ENCODE measurements at regions of chr6 and their contacts with region 1.

Region 1: GRCh38 chr6:38493931-38494547 is 145.7 kb downstream of the BTBD9 start:
- DNase-seq: peak; percentile 88
- H3K4me3 Mint-ChIP-seq: no peak overlapping the region
- H3K27ac Mint-ChIP-seq: no peak overlapping the region
- H3K4me1 Mint-ChIP-seq: peaks cover 9% of the 10 kb centered on the region
- H3K27me3 Mint-ChIP-seq: no peaks in the 10 kb centered on the region

Region 2: DNA sequence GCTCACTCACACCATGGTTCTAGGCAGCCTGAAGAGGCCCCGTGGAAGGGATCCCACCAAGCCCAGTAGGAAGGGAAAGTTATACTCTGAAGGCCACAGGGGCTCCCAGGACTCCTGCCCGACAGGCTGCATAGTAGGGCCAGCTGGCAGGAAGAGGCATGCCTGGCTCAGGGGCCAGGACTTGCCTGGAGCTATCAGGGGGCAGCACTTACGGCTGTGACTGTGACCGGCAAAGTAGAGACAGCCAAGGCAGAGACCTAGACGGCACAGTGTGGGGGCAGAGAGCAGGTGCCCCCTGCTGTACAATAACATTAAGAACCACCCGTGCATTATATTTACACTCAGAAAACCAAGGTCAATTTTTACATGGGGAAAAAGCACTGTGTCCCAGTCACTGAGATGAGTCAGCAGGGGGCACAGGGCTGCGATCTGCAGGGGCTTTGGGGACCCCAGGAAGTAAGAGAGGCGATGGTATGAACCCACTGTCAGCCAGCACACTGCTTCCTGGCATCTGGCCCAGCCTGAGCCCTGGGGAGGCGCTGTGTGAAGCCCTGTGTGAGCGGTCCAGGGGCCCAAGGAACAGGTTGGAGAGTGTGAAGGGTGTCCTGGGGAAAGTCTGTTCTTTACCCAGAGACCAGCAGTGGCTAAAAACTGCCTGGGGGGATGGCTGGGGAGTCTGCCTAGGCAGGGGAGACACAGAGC is 1004.2 kb before region 1 on chr6:
- CTCF ChIA-PET with region 1: no interaction called
- POLR2A ChIA-PET with region 1: no interaction called
- intact Hi-C with region 1: loop called (anchors 5 kb)
- DNase-seq: peak; percentile 51
- H3K4me3 Mint-ChIP-seq: no peak overlapping the region
- H3K27ac Mint-ChIP-seq: peak overlapping the region; percentile 76
- H3K4me1 Mint-ChIP-seq: peaks cover 70% of the 10 kb centered on the region
- H3K27me3 Mint-ChIP-seq: no peaks in the 10 kb centered on the region

Region 3: GRCh38 chr6:37698261-37699137 is 795.5 kb before region 1 on chr6:
- CTCF ChIA-PET with region 1: no interaction called
- POLR2A ChIA-PET with region 1: no interaction called
- intact Hi-C with region 1: loop called (anchors 5 kb)
- DNase-seq: peak; percentile 72
- H3K4me3 Mint-ChIP-seq: peak overlapping the region; percentile 95
- H3K27ac Mint-ChIP-seq: peak overlapping the region; percentile 87
- H3K4me1 Mint-ChIP-seq: peaks cover 21% of the 10 kb centered on the region
- H3K27me3 Mint-ChIP-seq: peaks cover 12% of the 10 kb centered on the region

Region 4: GRCh38 chr6:37791156-37791919 is 702.7 kb before region 1 on chr6:
- CTCF ChIA-PET with region 1: interaction called, 4 read pairs
- POLR2A ChIA-PET with region 1: no interaction called
- intact Hi-C with region 1: loop called (anchors 5 kb)
- DNase-seq: peak; percentile 94
- H3K4me3 Mint-ChIP-seq: no peak overlapping the region
- H3K27ac Mint-ChIP-seq: no peak overlapping the region
- H3K4me1 Mint-ChIP-seq: peaks cover 12% of the 10 kb centered on the region
- H3K27me3 Mint-ChIP-seq: no peaks in the 10 kb centered on the region

Region 5: DNA sequence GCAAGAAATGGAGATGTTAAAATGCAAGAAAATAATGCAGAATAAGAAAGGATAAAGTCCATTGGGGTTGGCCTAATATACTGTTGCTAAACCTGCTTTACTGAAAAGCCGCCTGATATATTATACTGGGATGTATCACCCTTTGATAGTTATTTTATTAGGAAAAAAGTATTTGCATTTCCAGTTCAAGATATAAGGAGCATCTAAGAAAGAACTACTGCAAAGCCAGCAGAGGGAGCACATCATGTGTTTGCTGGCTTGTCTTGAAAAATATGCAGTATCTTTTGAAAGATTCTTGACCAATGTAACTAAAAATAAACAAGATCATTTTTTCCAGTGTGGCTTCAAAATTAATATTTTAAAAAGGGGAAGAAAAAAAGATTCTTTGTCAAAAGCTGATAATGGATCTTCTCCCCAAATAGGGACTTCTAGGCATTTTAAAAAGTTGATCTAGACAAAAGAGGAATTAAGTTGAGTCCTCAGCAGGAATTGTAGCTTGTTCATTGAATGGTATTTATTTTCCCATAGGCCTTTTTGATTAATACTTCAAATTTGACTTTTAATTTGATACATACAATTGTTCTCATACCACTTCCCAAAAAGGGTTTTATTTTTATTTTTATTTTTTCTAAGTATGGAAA is 459.6 kb before region 1 on chr6:
- CTCF ChIA-PET with region 1: interaction called, 21 read pairs
- POLR2A ChIA-PET with region 1: no interaction called
- intact Hi-C with region 1: loop called (anchors 10 kb)
- DNase-seq: no peak
- H3K4me3 Mint-ChIP-seq: no peak overlapping the region
- H3K27ac Mint-ChIP-seq: no peak overlapping the region
- H3K4me1 Mint-ChIP-seq: peaks cover 40% of the 10 kb centered on the region
- H3K27me3 Mint-ChIP-seq: no peaks in the 10 kb centered on the region

Region 6: GRCh38 chr6:38483526-38483925 is 10.5 kb before region 1 on chr6:
- CTCF ChIA-PET with region 1: interaction called, 19 read pairs
- POLR2A ChIA-PET with region 1: no interaction called
- intact Hi-C with region 1: no loop called
- DNase-seq: no peak
- H3K4me3 Mint-ChIP-seq: no peak overlapping the region
- H3K27ac Mint-ChIP-seq: no peak overlapping the region
- H3K4me1 Mint-ChIP-seq: peaks cover 5% of the 10 kb centered on the region
- H3K27me3 Mint-ChIP-seq: no peaks in the 10 kb centered on the region

Region 7: GRCh38 chr6:38542031-38542430 is 48.0 kb after region 1 on chr6:
- CTCF ChIA-PET with region 1: no interaction called
- POLR2A ChIA-PET with region 1: no interaction called
- intact Hi-C with region 1: no loop called
- DNase-seq: no peak
- H3K4me3 Mint-ChIP-seq: no peak overlapping the region
- H3K27ac Mint-ChIP-seq: no peak overlapping the region
- H3K4me1 Mint-ChIP-seq: no peaks in the 10 kb centered on the region
- H3K27me3 Mint-ChIP-seq: no peaks in the 10 kb centered on the region

Region 8: GRCh38 chr6:38671885-38672467 is 177.9 kb after region 1 on chr6:
- CTCF ChIA-PET with region 1: interaction called, 4 read pairs
- POLR2A ChIA-PET with region 1: no interaction called
- intact Hi-C with region 1: loop called (anchors 1 kb)
- DNase-seq: peak; percentile 39
- H3K4me3 Mint-ChIP-seq: no peak overlapping the region
- H3K27ac Mint-ChIP-seq: peak overlapping the region; percentile 20
- H3K4me1 Mint-ChIP-seq: peaks cover 38% of the 10 kb centered on the region
- H3K27me3 Mint-ChIP-seq: no peaks in the 10 kb centered on the region